ENCODE measurements at regions of chr3 and their contacts with region 1.

Region 1: DNA sequence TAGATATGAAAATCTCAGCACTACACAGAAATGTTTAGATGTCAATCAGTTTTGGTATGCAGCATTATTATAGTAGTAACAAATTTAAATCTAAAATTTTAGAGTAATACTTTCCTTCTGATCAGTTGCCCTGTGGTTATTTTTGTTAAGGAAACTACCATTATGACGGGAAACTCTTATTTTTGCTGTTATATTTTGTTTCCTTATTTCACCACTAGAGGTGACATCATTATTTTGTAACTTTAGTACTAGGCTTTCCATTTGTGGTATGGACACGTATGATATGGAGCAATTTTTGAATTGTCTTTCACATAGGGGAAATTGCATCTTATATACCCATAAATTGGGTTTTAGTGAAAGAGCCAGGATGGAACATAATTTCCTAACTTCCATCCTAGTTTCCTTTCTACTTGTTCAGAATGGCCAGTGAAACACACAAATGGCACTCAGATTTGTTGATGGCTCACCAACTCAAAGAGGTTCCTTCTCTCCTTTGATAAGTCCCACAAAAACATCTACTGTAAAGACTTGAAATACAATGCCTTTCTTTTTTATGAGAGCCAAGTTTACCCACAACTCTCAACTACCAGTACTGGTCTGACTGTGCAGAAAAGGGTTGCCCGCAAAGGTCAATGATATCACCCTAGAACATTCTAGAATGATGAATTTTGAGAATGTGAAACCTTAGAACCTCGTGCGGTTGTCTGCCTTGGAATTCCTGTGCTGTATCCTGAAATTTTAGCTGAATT is 19.4 kb upstream of the PPP4R2 start:
- DNase-seq: no peak
- ATAC-seq: peak; percentile 92
- H3K4me3 ChIP-seq: no peak overlapping the region
- H3K27ac ChIP-seq: no peak overlapping the region
- H3K4me1 ChIP-seq: peaks cover 25% of the 10 kb centered on the region
- H3K27me3 ChIP-seq: no peaks in the 10 kb centered on the region
- CTCF ChIP-seq: peak in 2 of 3 experiments; percentile 6 to 17; a peak in 2 of 6 replicates
- EP300 ChIP-seq: peak in 1 of 2 experiments; percentile 66; a peak in 1 of 4 replicates
- POLR2A ChIP-seq: no peak
- RAD21 ChIP-seq: no peak

Region 2: GRCh38 chr3:72426618-72427397 is 550.4 kb before region 1 on chr3:
- CTCF ChIA-PET with region 1: no interaction called
- POLR2A ChIA-PET with region 1: no interaction called
- RAD21 ChIA-PET with region 1: no interaction called
- SMC1A ChIA-PET with region 1: no interaction called
- in situ Hi-C with region 1: no loop called
- intact Hi-C with region 1: no loop called
- DNase-seq: no peak
- ATAC-seq: peak; percentile 76
- H3K4me3 ChIP-seq: 0 out of 2 replicates have a peak overlapping the region, but pooled peaks have one; percentile 27
- H3K27ac ChIP-seq: peak overlapping the region; percentile 37; the same call in 1 of the 2 replicates
- H3K4me1 ChIP-seq: peaks cover 28% of the 10 kb centered on the region
- H3K27me3 ChIP-seq: no peaks in the 10 kb centered on the region
- CTCF ChIP-seq: no peak
- EP300 ChIP-seq: no peak
- POLR2A ChIP-seq: no peak
- RAD21 ChIP-seq: no peak

Region 3: DNA sequence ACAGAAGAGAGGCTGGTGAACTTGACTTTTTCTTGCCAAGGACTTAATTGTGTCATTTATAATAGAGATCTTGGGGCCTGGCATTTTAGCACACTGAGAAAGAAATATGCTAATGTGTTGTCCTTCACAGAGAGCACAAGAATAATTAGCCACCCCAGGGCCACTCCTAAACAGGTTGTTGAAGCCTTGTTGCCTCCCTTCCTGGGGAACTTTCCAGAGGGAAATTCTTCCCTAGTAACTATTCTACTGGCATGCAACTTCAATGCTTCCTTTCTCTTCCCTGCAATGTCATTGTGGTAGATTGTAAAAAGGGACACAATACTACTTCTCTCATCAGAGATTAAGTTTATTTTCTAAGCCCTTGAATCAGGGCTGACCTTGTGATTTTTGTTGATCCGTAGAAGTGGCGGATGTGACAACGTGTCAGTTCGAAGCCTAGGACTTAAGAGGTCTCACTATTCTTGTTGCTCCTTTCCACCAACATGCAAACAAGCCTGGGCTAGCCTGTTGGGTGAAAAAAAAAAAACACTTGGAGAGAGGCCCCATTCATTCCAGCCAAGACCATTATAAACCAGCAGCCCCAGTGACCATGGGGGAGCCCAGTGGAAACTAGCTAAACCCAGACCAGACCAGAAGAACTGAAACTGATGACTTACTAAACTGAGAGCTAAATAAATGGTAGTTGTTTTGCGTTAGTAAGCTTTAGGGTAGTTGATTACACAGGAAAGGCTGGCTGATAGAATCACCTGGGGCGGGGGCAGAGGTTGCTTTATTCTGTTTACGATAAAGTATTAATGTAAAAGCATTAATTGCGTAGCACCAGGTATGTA is 416.2 kb before region 1 on chr3:
- CTCF ChIA-PET with region 1: no interaction called
- POLR2A ChIA-PET with region 1: no interaction called
- RAD21 ChIA-PET with region 1: no interaction called
- SMC1A ChIA-PET with region 1: no interaction called
- in situ Hi-C with region 1: no loop called
- intact Hi-C with region 1: no loop called
- DNase-seq: no peak
- ATAC-seq: peak; percentile 78
- H3K4me3 ChIP-seq: no peak overlapping the region
- H3K27ac ChIP-seq: no peak overlapping the region
- H3K4me1 ChIP-seq: no peaks in the 10 kb centered on the region
- H3K27me3 ChIP-seq: no peaks in the 10 kb centered on the region
- CTCF ChIP-seq: no peak
- EP300 ChIP-seq: no peak
- POLR2A ChIP-seq: no peak
- RAD21 ChIP-seq: no peak

Region 4: DNA sequence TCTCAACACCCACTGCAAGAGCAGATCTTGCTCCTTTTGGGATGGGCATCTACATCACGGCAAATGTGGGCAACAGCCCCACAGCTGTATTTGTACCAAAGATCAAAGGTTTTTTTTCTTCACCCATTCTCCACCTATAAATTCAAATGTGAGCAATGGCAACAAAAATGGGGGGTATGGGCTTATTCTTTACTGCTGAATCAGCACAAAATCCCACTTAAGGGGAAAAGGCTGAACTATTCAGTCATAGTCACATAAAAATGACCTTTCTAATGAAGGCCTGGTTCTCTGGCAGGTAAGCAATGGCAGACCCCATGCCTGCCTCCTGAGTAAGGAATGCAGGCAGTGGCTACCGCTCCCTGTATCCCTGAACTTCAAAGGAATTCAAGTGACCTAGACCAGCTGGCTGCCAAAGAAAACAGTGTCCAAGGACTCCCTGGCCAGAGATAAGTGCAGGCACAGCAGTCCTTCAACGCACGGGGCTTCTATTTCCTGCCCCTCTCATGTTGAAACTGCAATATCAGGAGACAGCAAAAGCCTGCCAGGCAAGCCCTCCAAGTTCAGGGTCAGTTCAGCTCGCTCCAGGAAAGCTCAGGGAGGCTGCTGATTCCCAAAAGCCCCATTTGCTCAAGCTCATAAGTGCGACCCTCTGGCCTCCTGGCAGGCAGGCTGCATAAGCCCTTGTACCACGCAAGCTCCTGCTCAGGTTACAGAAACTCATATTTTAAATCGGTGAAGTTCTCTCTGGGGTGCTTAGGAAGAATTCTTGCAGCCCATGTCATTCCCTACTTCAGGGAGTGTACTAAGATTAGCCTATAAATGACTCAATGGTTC is 513.4 kb after region 1 on chr3:
- CTCF ChIA-PET with region 1: no interaction called
- POLR2A ChIA-PET with region 1: no interaction called
- RAD21 ChIA-PET with region 1: no interaction called
- SMC1A ChIA-PET with region 1: no interaction called
- in situ Hi-C with region 1: no loop called
- intact Hi-C with region 1: loop called (anchors 10 kb)
- DNase-seq: no peak
- ATAC-seq: no peak
- H3K4me3 ChIP-seq: no peak overlapping the region
- H3K27ac ChIP-seq: no peak overlapping the region
- H3K4me1 ChIP-seq: peaks cover 2% of the 10 kb centered on the region
- H3K27me3 ChIP-seq: no peaks in the 10 kb centered on the region
- CTCF ChIP-seq: no peak
- EP300 ChIP-seq: no peak
- POLR2A ChIP-seq: no peak
- RAD21 ChIP-seq: no peak